ENCODE measurements at regions of chr16 and their contacts with region 1.

Region 1: DNA sequence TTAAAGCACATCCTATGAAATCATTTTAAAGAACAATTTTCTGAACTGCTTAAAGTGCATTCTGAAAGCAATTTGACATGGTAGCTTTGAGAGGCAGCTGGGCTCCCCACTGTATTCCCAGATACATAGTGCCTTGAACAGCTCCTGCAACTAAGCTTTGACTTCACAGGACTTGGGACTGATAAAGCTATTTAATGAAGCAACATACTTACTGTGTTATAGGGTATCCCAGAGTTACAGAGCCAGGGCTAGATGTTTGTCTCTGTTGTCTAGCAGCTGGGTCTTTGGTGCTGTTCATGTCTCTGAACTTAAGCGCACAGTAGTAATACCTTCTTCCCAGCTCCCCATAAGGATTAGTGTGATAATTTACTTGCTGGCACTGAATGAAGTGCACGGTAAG is 862 bp downstream of the ACSM1 start:
- DNase-seq: no peak
- ATAC-seq: no peak

Region 2: GRCh38 chr16:20624882-20625807 is 71.5 kb before region 1 on chr16:
- intact Hi-C with region 1: no loop called
- DNase-seq: no peak
- ATAC-seq: no peak

Region 3: DNA sequence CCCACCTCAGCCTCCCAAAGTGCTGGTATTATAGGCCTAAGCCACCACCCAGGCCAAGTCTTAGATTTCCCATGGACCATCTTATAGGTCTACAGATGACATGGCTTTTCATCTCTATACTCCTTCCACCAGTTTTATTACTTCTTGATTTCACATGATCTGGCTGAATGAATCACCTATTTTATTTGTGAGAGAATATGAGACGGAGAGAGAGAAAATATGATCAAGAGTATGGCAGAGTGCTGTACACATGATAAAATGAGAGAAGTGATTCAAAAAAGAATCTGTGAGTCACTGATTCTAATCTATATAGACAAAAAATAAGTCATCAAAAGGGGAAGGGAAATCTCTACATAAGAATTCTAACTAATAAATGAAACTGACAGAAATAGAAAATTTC is 12.8 kb before region 1 on chr16:
- intact Hi-C with region 1: loop called (anchors 2 kb)
- DNase-seq: no peak
- ATAC-seq: no peak

Region 4: GRCh38 chr16:20763461-20764232 is 67.0 kb after region 1 on chr16 and contains the start of gene ACSM3:
- intact Hi-C with region 1: no loop called
- DNase-seq: no peak
- ATAC-seq: peak; percentile 97
- total RNA-seq, gene ACSM3: 2.8 TPM